GM10248 (cell line): ENCODE measurements at regions of chr3 and their contacts with region 1.

Region 1: GRCh38 chr3:183085634-183086390 is 13.5 kb downstream of the MCCC1 start:
- DNase-seq: no peak
- CTCF ChIP-seq: peak; percentile 39

Region 2: DNA sequence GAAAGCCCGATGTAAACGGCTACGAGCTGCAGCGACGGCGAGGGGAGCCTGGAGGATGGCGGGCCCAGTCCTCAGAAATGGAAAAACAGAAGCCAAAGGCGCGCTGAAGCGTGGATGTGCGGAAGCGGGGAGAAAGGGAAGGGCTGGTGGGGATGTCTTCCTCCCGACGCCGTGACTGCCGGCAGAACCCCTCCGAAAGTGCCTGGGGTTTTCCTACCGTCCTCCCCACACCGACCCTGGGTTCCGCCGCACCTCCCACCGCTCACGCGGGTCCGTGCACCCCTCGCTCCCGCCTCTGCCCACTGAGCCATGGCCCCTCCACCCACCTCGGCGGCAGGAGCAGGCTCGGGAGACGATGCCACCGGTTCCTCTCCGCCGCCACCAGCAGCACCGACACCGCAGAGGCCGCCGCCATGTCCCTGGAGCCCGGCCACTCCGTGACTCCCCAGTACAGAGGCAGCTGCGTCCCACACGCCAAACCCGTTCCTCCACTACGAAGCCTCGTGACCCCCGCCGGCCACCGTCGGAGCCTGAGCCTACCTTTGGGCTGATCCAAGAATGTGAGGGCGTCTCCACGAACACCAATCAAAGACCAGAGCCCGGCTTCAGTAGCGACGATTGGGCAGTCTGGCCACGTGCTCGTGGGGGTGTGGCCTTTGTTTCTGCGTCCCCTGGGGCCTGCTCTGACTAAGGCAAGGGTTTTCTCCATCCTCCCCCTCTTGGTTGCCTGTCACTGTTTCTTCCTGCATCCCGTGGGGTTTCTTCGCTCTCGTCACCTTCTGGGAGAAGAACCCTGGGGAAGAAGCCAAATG is 13.4 kb after region 1 on chr3 and contains the start of gene MCCC1:
- CTCF ChIA-PET with region 1: interaction called, 69 read pairs
- POLR2A ChIA-PET with region 1: interaction called, 3 read pairs
- DNase-seq: peak; percentile 98
- CTCF ChIP-seq: no peak